Gastrocnemius medialis (tissue), 4 donors: ENCODE measurements at regions of chr13 and their contacts with region 1.

Region 1: DNA sequence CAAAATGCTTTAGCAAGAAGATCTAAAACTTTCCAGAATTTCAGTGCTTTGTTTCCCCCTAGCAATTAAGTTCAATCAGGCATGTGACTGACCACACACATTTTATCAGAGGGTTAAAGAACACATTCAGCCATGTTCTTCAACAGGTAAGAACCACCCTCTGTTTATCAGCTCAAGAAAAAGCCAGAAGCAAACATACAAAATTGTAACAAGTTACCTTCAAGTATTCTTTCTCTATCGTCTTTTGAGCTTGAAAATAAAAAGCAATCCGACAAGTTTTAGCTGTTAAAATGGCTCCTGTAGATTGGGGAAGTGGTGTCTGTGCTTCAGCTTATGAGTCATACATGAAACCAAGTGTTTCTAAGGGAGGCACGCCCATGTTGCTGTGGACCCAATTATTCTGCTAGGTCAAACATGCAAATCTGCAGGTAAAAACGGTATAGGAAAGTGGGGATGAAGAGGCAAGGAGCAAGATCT is at the start of gene ELF1:
- DNase-seq: peak; percentile 32 to 40
- ATAC-seq: peak; percentile 84 to 96
- H3K4me3 ChIP-seq: peak within 1 kb of the TSS in 3 of 4 donors; percentile 2 to 23 (median 18)
- H3K27ac ChIP-seq: peak within 1 kb of the TSS; percentile 66 to 77 (median 72)
- H3K4me1 ChIP-seq: peaks cover 48 to 69% of the 10 kb centered on the region in 2 donors
- H3K27me3 ChIP-seq: no peaks in the 10 kb centered on the region
- CTCF ChIP-seq: no peak
- POLR2A ChIP-seq: peak in 1 of 2 donors; percentile 23
- total RNA-seq, gene ELF1: 24.8 to 48.7 (median 33.7) TPM

Region 2: GRCh38 chr13:40982772-40983171 is 36.3 kb before region 1 on chr13:
- in situ Hi-C with region 1: no loop called
- intact Hi-C with region 1: loop called (anchors 5 kb)
- DNase-seq: peak in 1 of 2 donors; percentile 24
- ATAC-seq: peak; percentile 42 to 64
- H3K4me3 ChIP-seq: peak overlapping the region; percentile 21 to 44 (median 34)
- H3K27ac ChIP-seq: peak overlapping the region; percentile 70 to 79 (median 74)
- H3K4me1 ChIP-seq: peaks cover 59 to 71% of the 10 kb centered on the region in 2 donors
- H3K27me3 ChIP-seq: no peaks in the 10 kb centered on the region
- CTCF ChIP-seq: no peak
- POLR2A ChIP-seq: peak; percentile 41 to 83

Region 3: DNA sequence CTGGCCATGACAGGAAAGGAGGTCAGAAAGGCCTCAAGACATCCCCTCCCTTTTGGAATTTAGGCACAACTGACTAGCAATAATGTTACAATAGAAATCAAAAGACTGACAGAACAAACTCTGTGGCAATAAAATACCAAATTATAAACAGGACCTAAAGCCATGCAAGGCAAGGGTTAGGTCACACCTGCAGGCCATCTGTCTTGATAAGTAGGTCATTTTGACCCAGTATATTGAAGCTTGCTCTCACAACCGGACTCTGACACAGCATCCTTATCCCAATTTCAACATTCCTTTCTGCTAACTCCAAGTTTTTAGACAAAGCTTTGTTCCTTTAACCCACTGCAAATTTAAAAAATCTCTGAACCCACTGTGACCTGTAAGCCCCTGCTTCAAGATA is 82.8 kb after region 1 on chr13:
- in situ Hi-C with region 1: no loop called
- intact Hi-C with region 1: no loop called
- DNase-seq: no peak
- ATAC-seq: no peak
- H3K4me3 ChIP-seq: no peak overlapping the region
- H3K27ac ChIP-seq: no peak overlapping the region
- H3K4me1 ChIP-seq: no peaks in the 10 kb centered on the region
- H3K27me3 ChIP-seq: no peaks in the 10 kb centered on the region
- CTCF ChIP-seq: no peak
- POLR2A ChIP-seq: no peak